Activated T-helper 2 cell treated with anti-CD3 and anti-CD28 coated beads, Interferon-gamma antibody, Interleukin-2, Interleukin-4, amounts not matched to agents 10 μg/mL and 5 μg/mL and 100 μg/mL, durations not matched to agents 14 hours and 24 hours and 36 hours (primary cell): ENCODE measurements at regions of chr2 and their contacts with region 1.

Region 1: GRCh38 chr2:61368687-61369665 is 101.9 kb downstream of the USP34 start:
- DNase-seq: no peak
- H3K4me3 Mint-ChIP-seq: no peak overlapping the region
- H3K27ac Mint-ChIP-seq: peak overlapping the region; percentile 67
- H3K4me1 Mint-ChIP-seq: peaks cover 26% of the 10 kb centered on the region
- H3K27me3 Mint-ChIP-seq: no peaks in the 10 kb centered on the region

Region 2: DNA sequence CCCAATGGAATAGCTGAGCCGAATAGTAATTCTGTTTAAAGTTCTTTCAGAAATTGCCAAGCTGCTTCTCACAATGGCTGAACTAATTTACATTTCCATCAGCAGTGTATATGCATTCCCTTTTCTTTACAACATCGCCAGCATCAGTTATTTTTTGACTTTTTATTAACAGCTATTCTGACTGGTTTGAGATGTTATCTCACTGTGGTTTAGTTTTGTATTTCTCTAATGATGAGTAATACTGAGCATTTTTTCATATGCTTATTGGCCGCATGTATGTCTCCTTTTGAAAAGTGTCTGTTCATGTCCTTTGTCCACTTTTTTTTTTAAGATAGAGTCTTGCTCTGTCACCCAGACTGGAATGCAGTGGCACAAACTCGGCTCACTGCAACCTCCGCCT is 106.3 kb before region 1 on chr2:
- intact Hi-C with region 1: loop called (anchors 5 kb)
- DNase-seq: no peak
- H3K4me3 Mint-ChIP-seq: no peak overlapping the region
- H3K27ac Mint-ChIP-seq: no peak overlapping the region
- H3K4me1 Mint-ChIP-seq: peaks cover 5% of the 10 kb centered on the region
- H3K27me3 Mint-ChIP-seq: no peaks in the 10 kb centered on the region

Region 3: GRCh38 chr2:61328707-61329251 is 40.2 kb before region 1 on chr2:
- intact Hi-C with region 1: loop called (anchors 2 kb)
- DNase-seq: no peak
- H3K4me3 Mint-ChIP-seq: peak overlapping the region; percentile 64
- H3K27ac Mint-ChIP-seq: peak overlapping the region; percentile 95
- H3K4me1 Mint-ChIP-seq: peaks cover 28% of the 10 kb centered on the region
- H3K27me3 Mint-ChIP-seq: no peaks in the 10 kb centered on the region